ENCODE measurements at regions of chr12 and their contacts with region 1.

Region 1: DNA sequence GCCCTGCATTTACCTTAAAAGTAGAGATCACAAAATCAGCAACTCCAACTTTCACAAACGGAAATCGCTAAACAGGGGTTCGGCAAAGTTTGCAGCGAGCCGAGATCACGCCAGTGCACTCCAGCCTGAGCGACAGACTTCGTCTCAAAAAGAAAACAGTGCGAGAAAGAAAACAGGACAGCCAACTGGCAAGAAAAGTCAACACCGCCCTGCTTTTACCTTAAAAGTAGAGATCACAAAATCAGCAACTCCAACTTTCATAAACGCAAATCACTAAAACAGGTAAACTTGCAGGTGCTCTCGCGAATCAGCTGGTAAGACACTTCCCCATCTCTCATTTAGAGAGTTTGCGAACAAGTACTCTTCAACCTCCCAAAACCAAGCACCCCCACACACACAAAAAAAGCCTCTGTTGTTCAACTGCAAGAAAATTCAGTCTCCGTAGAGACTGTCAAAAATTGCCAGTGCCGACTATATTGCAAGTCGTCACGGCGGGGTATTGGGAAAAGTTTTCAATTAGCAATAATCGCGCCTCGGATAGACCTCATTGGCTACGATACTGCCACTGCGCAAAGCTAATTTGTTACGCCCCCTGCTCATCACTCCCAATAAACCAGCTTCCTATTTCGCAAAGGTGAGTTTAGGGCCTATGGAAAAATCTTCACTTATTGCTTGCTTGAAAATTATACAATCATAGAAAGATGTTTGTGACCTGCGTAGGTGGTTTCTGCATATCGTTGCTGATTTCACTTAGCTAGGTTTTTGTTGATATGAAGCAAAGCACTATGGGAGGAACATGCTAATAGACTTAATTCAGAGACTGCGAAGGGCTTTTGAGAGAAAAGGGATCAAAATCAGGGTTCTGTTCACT is at the start of gene RNU4-1:
- DNase-seq: peak; percentile 56
- CTCF ChIP-seq: no peak

Region 2: DNA sequence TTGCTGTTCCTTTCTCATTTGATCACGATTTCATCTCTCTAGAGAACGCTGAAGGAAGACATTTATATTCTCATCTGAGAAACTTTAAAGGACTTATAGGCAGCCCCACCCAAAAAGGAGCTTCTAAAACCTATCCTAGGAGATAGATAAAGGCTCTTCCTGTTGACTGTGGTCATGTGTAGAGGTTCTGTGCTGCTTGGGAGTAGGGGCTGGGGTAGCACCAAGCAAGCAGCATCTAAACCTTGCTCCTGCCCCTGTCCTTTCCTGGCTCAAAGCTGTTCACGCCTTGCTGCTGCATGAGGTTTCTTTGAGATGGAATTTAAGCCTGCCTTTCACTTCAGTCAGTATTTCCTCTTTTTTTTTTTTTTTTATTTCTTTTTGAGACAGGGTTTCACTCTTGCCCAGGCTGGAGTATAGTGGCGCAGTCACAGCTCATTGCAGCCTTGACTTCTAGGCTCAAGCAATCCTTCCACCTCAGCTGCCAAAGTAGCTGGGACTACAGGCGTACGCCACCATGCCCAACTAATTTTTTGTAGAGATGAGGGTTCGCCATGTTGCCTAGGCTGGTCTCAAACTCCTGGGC is 217.8 kb before region 1 on chr12:
- CTCF ChIA-PET with region 1: no interaction called
- POLR2A ChIA-PET with region 1: no interaction called
- DNase-seq: no peak
- CTCF ChIP-seq: no peak

Region 3: DNA sequence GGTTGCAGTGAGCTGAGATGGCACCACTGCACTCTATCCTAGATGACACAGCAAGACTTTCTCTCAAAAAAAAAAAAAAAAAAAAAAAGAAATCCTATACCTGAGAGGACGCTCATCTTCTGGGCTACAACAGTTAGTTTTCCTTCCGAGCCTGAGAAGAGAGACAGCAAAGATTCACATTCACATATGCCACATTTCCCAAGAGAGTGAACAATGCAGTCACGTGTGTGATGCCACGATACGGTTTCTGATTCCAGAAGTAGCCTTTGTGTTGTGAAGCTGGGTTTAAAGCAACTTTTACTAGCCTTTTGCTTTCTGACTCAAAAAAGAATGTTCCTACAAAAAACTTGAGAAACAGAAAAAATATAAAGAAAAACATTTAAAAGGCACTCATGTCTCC is 117.8 kb before region 1 on chr12:
- CTCF ChIA-PET with region 1: no interaction called
- POLR2A ChIA-PET with region 1: no interaction called
- DNase-seq: no peak
- CTCF ChIP-seq: no peak

Region 4: DNA sequence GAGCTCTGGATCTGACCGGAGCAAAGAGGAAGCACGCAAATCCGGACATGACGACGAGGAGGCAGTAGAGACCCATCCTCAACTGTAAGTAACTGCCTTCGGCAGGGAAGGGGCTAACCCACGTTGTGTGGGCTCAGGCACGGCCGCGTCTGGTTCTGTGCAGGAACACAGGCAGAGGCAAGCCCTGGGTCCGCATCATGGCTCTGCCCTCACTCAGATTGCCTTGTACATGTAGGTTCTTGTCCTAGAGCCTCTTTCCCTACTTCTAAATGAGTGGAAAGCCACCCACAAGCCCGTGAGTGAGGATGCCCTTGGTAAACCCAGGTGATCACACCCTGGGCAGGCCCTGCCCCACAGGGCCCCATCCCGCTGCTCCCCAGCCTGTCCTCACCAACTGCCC is 83.0 kb before region 1 on chr12:
- CTCF ChIA-PET with region 1: no interaction called
- POLR2A ChIA-PET with region 1: interaction called, 14 read pairs
- DNase-seq: no peak
- CTCF ChIP-seq: no peak

Region 5: GRCh38 chr12:120228291-120229070 is 64.4 kb before region 1 on chr12:
- CTCF ChIA-PET with region 1: interaction called, 53 read pairs
- POLR2A ChIA-PET with region 1: interaction called, 52 read pairs
- DNase-seq: peak; percentile 92
- CTCF ChIP-seq: peak; percentile 97

Region 6: GRCh38 chr12:120249875-120250795 is 42.8 kb before region 1 on chr12:
- CTCF ChIA-PET with region 1: no interaction called
- POLR2A ChIA-PET with region 1: interaction called, 24 read pairs
- DNase-seq: peak; percentile 54
- CTCF ChIP-seq: no peak

Region 7: GRCh38 chr12:120317224-120318105 is 24.6 kb after region 1 on chr12:
- CTCF ChIA-PET with region 1: interaction called, 10 read pairs
- POLR2A ChIA-PET with region 1: interaction called, 12 read pairs
- DNase-seq: peak; percentile 99
- CTCF ChIP-seq: peak; percentile 59

Region 8: GRCh38 chr12:120445911-120446843 is 153.3 kb after region 1 on chr12 and contains the starts of genes GATC and TRIAP1:
- CTCF ChIA-PET with region 1: no interaction called
- POLR2A ChIA-PET with region 1: interaction called, 11 read pairs
- DNase-seq: peak; percentile 90
- CTCF ChIP-seq: no peak

Region 9: GRCh38 chr12:120496413-120497340 is 203.8 kb after region 1 on chr12:
- CTCF ChIA-PET with region 1: no interaction called
- POLR2A ChIA-PET with region 1: no interaction called
- DNase-seq: peak; percentile 70
- CTCF ChIP-seq: peak; percentile 30

Region 10: GRCh38 chr12:120562906-120563305 is 270.0 kb after region 1 on chr12:
- CTCF ChIA-PET with region 1: no interaction called
- POLR2A ChIA-PET with region 1: no interaction called
- DNase-seq: no peak
- CTCF ChIP-seq: no peak